Dorsolateral prefrontal cortex (tissue), 120 donors: ENCODE measurements at regions of chr2 and their contacts with region 1.

Region 1: GRCh38 chr2:97654791-97655190 is 8.9 kb downstream of the COX5B start:
- DNase-seq: no peak
- H3K4me3 ChIP-seq: no peak overlapping the region
- H3K27ac ChIP-seq: peak overlapping the region in 26 of 59 donors; percentile 9 to 71 (median 44)
- H3K27me3 ChIP-seq: no peaks in the 10 kb centered on the region
- CTCF ChIP-seq: no peak

Region 2: GRCh38 chr2:99171377-99172140 is 1516.8 kb after region 1 on chr2:
- intact Hi-C with region 1: loop called in 1 of 2 experiments (anchors 10 kb)
- DNase-seq: no peak
- H3K4me3 ChIP-seq: no peak overlapping the region
- H3K27ac ChIP-seq: no peak overlapping the region
- H3K27me3 ChIP-seq: no peaks in the 10 kb centered on the region
- CTCF ChIP-seq: no peak